ENCODE measurements at regions of chr10 and their contacts with region 1.

Region 1: GRCh38 chr10:49538381-49539319 is at the start of gene ERCC6:
- DNase-seq: peak; percentile 99
- H3K4me3 ChIP-seq: peak within 1 kb of the TSS; percentile 17 to 85 (median 70)
- H3K27ac ChIP-seq: peak within 1 kb of the TSS; percentile 84
- H3K4me1 ChIP-seq: peaks cover 45% of the 10 kb centered on the region
- H3K27me3 ChIP-seq: no peaks in the 10 kb centered on the region
- CTCF ChIP-seq: no peak
- POLR2A ChIP-seq: peak; percentile 39
- total RNA-seq, gene ERCC6: 39.6 and 59.6 TPM in 2 replicates

Region 2: DNA sequence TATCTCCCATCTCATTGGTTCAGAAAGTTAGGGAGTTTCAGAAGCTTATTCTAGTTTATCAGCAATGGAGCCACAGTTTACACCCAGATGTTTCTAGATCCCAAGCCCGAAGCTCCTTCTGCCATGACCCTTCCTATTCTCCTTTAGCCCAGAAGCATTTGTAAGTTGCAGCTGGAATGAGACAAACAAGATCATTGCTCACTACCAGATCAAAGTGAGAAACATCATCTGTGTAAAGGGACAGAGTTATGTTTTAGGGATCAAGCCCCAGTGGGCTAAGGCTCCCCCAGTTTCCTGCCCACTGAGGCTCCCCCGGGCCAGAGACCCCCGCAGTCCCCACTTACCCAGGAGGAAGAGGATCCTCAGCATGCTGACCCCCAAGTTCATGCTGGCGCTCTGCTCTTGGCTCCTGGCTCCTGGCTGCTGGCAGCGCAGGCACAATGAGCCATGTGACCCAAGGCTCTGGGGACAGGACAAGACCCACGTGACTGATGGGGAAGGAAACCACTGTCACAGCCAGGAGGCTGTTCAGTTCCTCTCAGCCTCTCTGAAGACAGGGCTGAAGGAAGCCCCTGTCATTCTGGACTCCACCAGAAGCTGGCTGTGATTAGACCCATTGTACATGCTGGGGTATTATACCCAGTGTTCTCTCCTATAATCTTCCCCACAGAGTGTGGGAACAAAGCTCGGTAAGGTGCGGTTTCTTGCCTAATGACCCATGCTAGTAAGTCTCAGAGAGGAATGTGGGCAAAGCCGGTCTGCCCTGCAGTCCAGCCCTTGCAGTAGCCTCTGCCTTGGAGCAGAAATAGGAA is 350.5 kb before region 1 on chr10 and contains the start of gene TMEM273:
- CTCF ChIA-PET with region 1: no interaction called
- POLR2A ChIA-PET with region 1: no interaction called
- dilution Hi-C with region 1: no loop called
- intact Hi-C with region 1: loop called (anchors 10 kb)
- DNase-seq: peak; percentile 32
- H3K4me3 ChIP-seq: no peak within 1 kb of the TSS
- H3K27ac ChIP-seq: no peak within 1 kb of the TSS
- H3K4me1 ChIP-seq: peaks cover 16% of the 10 kb centered on the region
- H3K27me3 ChIP-seq: peaks cover 0 to 5% of the 10 kb centered on the region in 2 experiments
- CTCF ChIP-seq: no peak
- POLR2A ChIP-seq: no peak
- total RNA-seq, gene TMEM273: 2.1 and 3.7 TPM in 2 replicates

Region 3: GRCh38 chr10:49474901-49475300 is 63.7 kb before region 1 on chr10:
- CTCF ChIA-PET with region 1: no interaction called
- POLR2A ChIA-PET with region 1: no interaction called
- dilution Hi-C with region 1: no loop called
- intact Hi-C with region 1: no loop called
- DNase-seq: no peak
- H3K4me3 ChIP-seq: no peak overlapping the region
- H3K27ac ChIP-seq: no peak overlapping the region
- H3K4me1 ChIP-seq: no peaks in the 10 kb centered on the region
- H3K27me3 ChIP-seq: no peaks in the 10 kb centered on the region
- CTCF ChIP-seq: no peak
- POLR2A ChIP-seq: no peak

Region 4: GRCh38 chr10:49552249-49552672 is 13.6 kb after region 1 on chr10:
- CTCF ChIA-PET with region 1: interaction called, 19 read pairs
- POLR2A ChIA-PET with region 1: interaction called, 20 read pairs
- dilution Hi-C with region 1: no loop called
- intact Hi-C with region 1: loop called (anchors 1 kb)
- DNase-seq: peak; percentile 83
- H3K4me3 ChIP-seq: peak overlapping the region in 1 of 3 experiments; percentile 32
- H3K27ac ChIP-seq: peak overlapping the region; percentile 99
- H3K4me1 ChIP-seq: peaks cover 42% of the 10 kb centered on the region
- H3K27me3 ChIP-seq: no peaks in the 10 kb centered on the region
- CTCF ChIP-seq: no peak
- POLR2A ChIP-seq: no peak

Region 5: DNA sequence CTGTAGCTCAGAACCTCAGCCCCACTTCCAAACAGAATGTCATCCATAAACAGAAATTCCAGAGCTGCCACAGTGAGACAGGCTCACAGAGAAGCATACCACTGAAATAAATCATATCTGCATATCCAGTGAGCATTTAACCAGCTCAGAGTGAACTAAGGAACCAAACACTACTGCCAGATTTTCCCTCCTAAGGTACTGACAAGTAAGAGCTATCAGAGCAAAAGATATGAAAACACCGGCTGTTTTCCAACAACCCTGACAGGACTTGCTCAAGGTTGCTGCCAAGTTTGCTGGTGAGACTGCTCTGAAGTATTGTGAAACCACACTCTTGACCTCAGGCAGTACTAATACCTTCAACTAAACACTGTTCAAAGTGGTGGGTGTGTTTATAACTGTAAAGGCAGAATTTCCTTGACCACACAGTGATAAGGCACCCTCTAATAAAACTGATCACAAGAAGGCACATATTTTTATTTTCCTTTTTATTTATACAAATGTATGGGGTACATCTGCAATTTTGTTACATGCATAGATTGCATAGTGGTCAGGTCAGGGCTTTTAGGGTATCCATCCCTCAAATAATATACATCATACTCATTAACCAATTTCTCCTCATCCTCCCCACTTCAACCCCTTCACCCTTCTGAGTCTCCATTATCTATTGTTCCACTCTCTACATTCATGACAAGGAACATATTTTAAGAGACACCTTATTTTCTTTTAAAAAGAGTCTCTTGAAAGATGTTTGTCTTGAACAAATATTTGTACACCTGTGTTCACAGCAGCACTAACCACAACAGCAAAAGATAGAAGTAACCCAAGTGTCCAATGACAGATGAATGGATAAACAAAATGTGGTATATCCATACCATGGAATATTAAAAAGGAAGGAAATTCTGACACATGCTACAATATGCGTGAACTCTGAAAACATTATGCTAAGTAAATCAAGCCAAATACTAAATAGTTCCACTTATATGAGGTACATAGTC is 1066.9 kb after region 1 on chr10:
- CTCF ChIA-PET with region 1: no interaction called
- POLR2A ChIA-PET with region 1: no interaction called
- dilution Hi-C with region 1: no loop called
- intact Hi-C with region 1: no loop called
- DNase-seq: peak; percentile 84
- H3K4me3 ChIP-seq: no peak overlapping the region
- H3K27ac ChIP-seq: peak overlapping the region; percentile 39
- H3K4me1 ChIP-seq: peaks cover 33% of the 10 kb centered on the region
- H3K27me3 ChIP-seq: no peaks in the 10 kb centered on the region
- CTCF ChIP-seq: no peak
- POLR2A ChIP-seq: no peak